ENCODE measurements at regions of chr18 and their contacts with region 1.

Region 1: GRCh38 chr18:616380-616995 is 19.7 kb downstream of the CLUL1 start:
- DNase-seq: peak; percentile 35
- ATAC-seq: no peak
- H3K4me3 ChIP-seq: no peak overlapping the region
- H3K27ac ChIP-seq: no peak overlapping the region
- H3K4me1 ChIP-seq: no peaks in the 10 kb centered on the region
- H3K27me3 ChIP-seq: peaks cover 0 to 4% of the 10 kb centered on the region in 2 experiments; a peak in 3 of 5 replicates
- CTCF ChIP-seq: peak; percentile 74
- EP300 ChIP-seq: no peak
- POLR2A ChIP-seq: no peak
- RAD21 ChIP-seq: peak; percentile 72

Region 2: DNA sequence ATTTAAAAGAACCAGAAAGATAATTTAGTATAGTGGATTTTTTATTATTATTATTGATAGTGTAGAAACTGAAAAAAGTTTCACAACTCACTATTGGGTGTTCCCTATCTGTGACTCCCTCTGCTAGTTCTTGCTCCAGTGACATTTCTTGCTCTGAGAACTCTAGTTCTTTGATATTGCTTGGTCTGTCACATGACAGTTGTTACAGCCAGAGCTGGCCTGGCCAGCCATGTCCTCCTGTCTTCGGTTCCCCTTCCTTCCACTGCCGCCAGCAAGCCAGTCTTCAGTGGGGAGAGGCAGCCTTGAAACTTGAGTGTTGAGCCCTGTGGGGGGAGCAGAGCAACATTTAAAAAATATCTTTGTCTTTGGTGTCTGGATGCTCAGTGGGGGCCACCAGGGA is 341.0 kb before region 1 on chr18:
- CTCF ChIA-PET with region 1: no interaction called
- POLR2A ChIA-PET with region 1: no interaction called
- in situ Hi-C with region 1: loop called (anchors 10 kb)
- intact Hi-C with region 1: no loop called
- DNase-seq: no peak
- ATAC-seq: no peak
- H3K4me3 ChIP-seq: no peak overlapping the region
- H3K27ac ChIP-seq: no peak overlapping the region
- H3K4me1 ChIP-seq: peaks cover 1% of the 10 kb centered on the region; the same call in 1 of the 2 replicates
- H3K27me3 ChIP-seq: no peaks in the 10 kb centered on the region
- CTCF ChIP-seq: no peak
- EP300 ChIP-seq: no peak
- POLR2A ChIP-seq: no peak
- RAD21 ChIP-seq: no peak

Region 3: DNA sequence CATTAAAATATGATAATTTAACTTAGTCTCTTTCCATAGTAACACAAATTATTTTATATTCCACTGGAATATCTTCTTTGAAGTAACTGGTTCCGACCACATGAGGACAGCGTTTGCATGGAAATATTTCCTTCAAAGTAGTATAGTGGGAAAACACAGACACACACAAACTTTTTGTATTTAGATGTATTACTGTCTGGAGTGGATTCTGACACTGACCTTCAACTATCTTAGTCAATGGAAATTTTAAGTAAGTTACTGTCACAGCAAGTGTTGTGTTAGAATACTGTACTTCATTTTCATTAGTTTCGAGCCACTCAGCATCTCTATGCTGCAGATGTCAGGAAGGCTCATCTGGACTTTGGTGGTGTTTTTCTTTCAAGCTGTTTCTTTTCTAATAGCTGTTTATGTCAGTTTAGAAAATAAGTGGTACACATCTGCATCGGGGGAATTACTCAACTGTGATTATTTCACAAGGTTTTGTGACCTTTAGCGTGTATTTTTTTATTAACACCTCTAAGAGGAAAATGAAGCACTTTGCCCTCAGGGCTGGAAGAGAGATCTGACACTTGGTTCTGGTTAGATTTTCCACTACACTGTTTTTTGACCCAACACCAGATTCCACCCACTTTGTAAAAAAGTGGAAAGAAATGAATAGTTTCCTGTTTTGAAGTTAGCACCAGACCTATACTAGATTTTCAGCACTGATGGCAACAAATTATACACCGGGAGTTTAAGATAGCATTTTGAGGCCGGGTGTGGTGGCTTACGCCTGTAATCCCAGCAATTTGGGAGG is 329.8 kb before region 1 on chr18:
- CTCF ChIA-PET with region 1: interaction called, 11 read pairs
- POLR2A ChIA-PET with region 1: no interaction called
- in situ Hi-C with region 1: no loop called
- intact Hi-C with region 1: loop called (anchors 1 kb)
- DNase-seq: peak; percentile 20
- ATAC-seq: peak; percentile 39; the same call in 2 of the 3 replicates
- H3K4me3 ChIP-seq: no peak overlapping the region
- H3K27ac ChIP-seq: no peak overlapping the region
- H3K4me1 ChIP-seq: no peaks in the 10 kb centered on the region
- H3K27me3 ChIP-seq: no peaks in the 10 kb centered on the region
- CTCF ChIP-seq: peak; percentile 64
- EP300 ChIP-seq: no peak
- POLR2A ChIP-seq: no peak
- RAD21 ChIP-seq: peak; percentile 55; the same call in 1 of the 2 replicates

Region 4: GRCh38 chr18:463827-464541 is 152.5 kb before region 1 on chr18:
- CTCF ChIA-PET with region 1: no interaction called
- POLR2A ChIA-PET with region 1: no interaction called
- in situ Hi-C with region 1: no loop called
- intact Hi-C with region 1: no loop called
- DNase-seq: no peak
- ATAC-seq: no peak
- H3K4me3 ChIP-seq: no peak overlapping the region
- H3K27ac ChIP-seq: no peak overlapping the region
- H3K4me1 ChIP-seq: no peaks in the 10 kb centered on the region
- H3K27me3 ChIP-seq: peaks cover 0 to 6% of the 10 kb centered on the region in 2 experiments; a peak in 2 of 5 replicates
- CTCF ChIP-seq: no peak
- EP300 ChIP-seq: no peak
- POLR2A ChIP-seq: no peak
- RAD21 ChIP-seq: no peak

Region 5: GRCh38 chr18:497688-498087 is 118.8 kb before region 1 on chr18:
- CTCF ChIA-PET with region 1: interaction called, 10 read pairs
- POLR2A ChIA-PET with region 1: no interaction called
- in situ Hi-C with region 1: no loop called
- intact Hi-C with region 1: loop called (anchors 1 kb)
- DNase-seq: no peak
- ATAC-seq: no peak
- H3K4me3 ChIP-seq: no peak overlapping the region
- H3K27ac ChIP-seq: no peak overlapping the region
- H3K4me1 ChIP-seq: peaks cover 20% of the 10 kb centered on the region
- H3K27me3 ChIP-seq: peaks cover 3 to 32% of the 10 kb centered on the region in 2 experiments
- CTCF ChIP-seq: no peak
- EP300 ChIP-seq: no peak
- POLR2A ChIP-seq: no peak
- RAD21 ChIP-seq: no peak

Region 6: GRCh38 chr18:556058-556457 is 60.4 kb before region 1 on chr18:
- CTCF ChIA-PET with region 1: no interaction called
- POLR2A ChIA-PET with region 1: no interaction called
- in situ Hi-C with region 1: no loop called
- intact Hi-C with region 1: no loop called
- DNase-seq: no peak
- ATAC-seq: no peak
- H3K4me3 ChIP-seq: no peak overlapping the region
- H3K27ac ChIP-seq: no peak overlapping the region
- H3K4me1 ChIP-seq: no peaks in the 10 kb centered on the region
- H3K27me3 ChIP-seq: no peaks in the 10 kb centered on the region
- CTCF ChIP-seq: no peak
- EP300 ChIP-seq: no peak
- POLR2A ChIP-seq: no peak
- RAD21 ChIP-seq: no peak

Region 7: GRCh38 chr18:577643-578375 is 38.7 kb before region 1 on chr18:
- CTCF ChIA-PET with region 1: no interaction called
- POLR2A ChIA-PET with region 1: no interaction called
- in situ Hi-C with region 1: no loop called
- intact Hi-C with region 1: no loop called
- DNase-seq: peak; percentile 40
- ATAC-seq: peak; percentile 72
- H3K4me3 ChIP-seq: no peak overlapping the region
- H3K27ac ChIP-seq: no peak overlapping the region
- H3K4me1 ChIP-seq: peaks cover 40% of the 10 kb centered on the region
- H3K27me3 ChIP-seq: no peaks in the 10 kb centered on the region; a peak in 1 of 5 replicates
- CTCF ChIP-seq: no peak
- EP300 ChIP-seq: no peak
- POLR2A ChIP-seq: no peak
- RAD21 ChIP-seq: no peak

Region 8: GRCh38 chr18:596288-596881 is 20.1 kb before region 1 on chr18:
- CTCF ChIA-PET with region 1: interaction called, 8 read pairs
- POLR2A ChIA-PET with region 1: interaction called, 4 read pairs
- in situ Hi-C with region 1: no loop called
- intact Hi-C with region 1: loop called (anchors 1 kb)
- DNase-seq: peak; percentile 43
- ATAC-seq: peak; percentile 89
- H3K4me3 ChIP-seq: peak overlapping the region; percentile 39 to 64 (median 61); a peak in 5 of 6 replicates
- H3K27ac ChIP-seq: peak overlapping the region; percentile 49
- H3K4me1 ChIP-seq: peaks cover 16% of the 10 kb centered on the region
- H3K27me3 ChIP-seq: 0 out of 5 replicates have a peak, but pooled peaks cover 0 to 3% of the 10 kb centered on the region in 2 experiments
- CTCF ChIP-seq: no peak
- EP300 ChIP-seq: no peak
- POLR2A ChIP-seq: peak in 1 of 2 experiments; percentile 58; a peak in 2 of 4 replicates
- RAD21 ChIP-seq: no peak

Measured in HepG2 (cell line).